ENCODE measurements at regions of chr11 and their contacts with region 1.

Region 1: DNA sequence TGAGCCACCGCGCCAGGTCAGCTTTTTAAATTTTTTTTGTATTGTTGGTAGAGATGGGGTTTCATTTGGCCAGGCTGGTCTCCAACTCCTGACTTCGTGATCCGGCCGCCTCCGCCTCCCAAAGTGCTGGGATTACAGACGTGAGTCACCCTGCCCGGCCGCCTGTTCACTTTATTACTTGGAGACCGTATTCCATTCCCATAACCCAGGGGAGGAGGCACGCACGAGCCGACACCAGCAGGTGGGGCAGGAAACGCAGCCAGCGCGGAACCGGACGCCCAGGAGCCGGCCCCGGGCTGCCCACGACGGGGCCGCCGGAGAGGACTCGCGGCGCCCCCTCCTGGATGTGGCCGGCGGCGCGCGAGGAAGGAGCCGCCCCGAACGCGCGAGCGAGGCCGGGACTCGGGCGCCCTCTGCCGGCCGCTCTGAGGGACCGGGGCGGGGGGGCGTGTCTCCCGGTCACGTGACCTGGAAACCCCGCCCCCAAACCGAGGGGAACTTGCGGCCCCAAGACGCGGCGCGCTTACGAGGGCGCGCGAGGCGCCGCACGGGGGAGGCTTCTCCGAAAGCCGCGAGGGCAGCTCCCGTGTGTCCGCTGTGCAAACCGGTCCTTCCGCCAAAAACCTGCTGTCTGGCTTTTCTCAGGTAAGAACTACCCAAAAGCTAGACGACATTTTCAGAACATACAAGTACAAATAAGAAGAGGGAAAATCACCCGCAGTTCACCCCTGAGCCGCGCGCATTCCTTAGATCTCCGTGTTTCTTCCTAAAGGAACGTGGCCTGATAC is 11.6 kb upstream of the RNH1 start:
- DNase-seq: peak; percentile 94
- ATAC-seq: peak; percentile 98

Region 2: DNA sequence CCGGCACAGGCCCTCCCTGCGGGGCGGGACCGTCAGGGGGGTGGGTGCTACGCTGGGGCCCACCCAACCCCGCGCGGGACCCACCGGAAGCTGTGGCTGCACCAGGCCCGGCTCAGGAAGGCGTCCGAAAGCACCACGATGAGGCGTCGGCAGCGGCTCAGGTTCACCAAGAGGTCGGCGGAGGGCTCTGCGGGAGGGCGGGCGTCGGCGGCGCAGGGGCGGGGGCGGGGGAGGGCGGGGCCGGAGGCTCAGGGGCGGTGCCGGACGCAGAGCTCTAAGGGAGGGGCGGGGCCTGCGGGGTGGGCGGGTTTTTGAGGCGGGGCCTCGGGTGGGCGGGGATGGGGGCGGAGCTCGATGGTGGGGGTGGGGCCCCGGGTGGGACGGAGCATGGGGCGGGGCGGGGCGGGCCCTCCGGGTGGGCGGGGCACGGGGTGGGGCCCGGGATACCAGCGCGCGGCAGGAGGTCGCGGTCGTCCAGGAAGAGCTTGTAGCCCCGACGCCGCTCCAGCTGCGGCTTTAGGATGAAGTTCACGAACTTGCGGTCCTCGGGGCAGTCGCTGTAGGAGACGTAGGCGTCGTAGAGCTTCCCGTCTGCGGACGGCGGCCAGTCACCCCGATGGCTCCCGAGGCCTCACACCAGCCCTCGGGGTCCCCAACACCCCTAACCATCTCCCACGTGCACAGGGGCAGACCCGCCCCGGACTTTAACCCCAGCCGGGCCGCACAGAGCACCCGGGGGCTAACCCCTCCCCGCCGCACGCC is 111.5 kb before region 1 on chr11:
- intact Hi-C with region 1: loop called in 1 of 2 experiments (anchors 5 kb)
- DNase-seq: peak; percentile 90
- ATAC-seq: peak; percentile 79

Measured in left cardiac atrium (tissue), 4 donors.